ENCODE measurements at regions of chr14 and their contacts with region 1.

Region 1: DNA sequence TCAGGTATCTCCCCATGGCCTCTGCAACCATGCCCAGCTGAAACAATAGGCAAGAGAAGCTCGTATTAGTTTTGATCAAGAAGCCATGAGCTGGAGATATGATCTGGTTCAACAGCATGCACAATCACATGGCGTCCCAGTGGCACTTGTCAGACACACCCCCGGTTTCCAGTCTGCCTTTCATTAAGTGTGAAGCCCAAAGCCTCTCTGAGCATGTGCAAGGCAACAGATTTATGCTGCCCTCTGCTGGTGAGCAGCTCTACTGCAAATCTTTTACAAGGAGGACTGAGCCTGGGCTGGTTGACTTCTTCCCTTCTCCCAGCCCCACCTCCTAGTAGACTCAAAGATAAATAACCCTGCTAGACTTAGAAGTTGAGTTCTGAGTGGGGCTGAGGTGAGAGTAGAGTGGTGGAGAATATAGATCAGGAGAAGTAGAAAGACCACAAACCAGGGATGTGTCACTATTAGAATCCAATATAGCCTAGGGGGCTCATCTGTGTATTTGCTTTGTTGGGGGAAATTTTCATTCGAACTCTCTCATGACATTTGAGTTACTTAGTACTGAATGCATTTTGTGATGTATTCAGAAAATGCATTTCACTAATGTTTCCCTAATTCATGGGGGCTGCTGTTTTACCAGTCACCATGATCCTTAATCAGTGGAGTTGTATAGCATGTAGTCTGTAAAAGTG is 53.7 kb upstream of the MBIP start:
- DNase-seq: peak; percentile 19 to 92 (median 70)

Region 2: DNA sequence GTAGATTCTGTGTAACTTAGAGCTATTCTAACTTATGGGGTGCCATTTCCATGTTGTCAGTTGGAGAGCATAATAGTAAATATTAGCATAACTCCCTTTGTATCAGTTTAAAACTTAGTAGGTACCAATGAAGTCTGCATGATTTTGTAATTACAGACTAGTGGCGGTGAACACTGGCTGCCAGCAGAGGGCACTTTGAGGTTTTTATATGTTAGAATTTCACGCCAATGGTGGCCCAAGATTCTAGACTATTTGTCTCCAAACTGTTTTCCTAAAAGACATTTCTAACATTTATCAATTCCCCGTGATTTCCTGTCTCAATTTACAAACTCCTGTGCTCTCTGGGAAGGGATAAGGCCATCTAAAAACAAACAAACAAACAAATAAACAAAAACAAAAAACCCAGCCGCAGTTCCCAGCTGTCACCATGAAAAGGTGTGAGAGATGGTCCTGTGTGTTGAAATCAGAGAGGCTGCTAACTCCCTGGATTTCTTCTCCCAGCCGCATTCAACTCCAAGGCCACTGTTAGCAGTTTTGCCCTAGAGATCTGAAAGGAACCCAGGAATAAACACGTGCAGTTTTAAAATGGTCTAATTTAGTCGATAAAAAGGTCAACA is 490.3 kb before region 1 on chr14:
- intact Hi-C with region 1: loop called (anchors 2 kb)
- DNase-seq: peak in 6 of 10 donors; percentile 36 to 91 (median 59)

Region 3: GRCh38 chr14:35963209-35963608 is 410.9 kb before region 1 on chr14:
- intact Hi-C with region 1: loop called (anchors 10 kb)
- DNase-seq: no peak

Region 4: GRCh38 chr14:36070031-36070719 is 304.0 kb before region 1 on chr14:
- intact Hi-C with region 1: loop called (anchors 2 kb)
- DNase-seq: peak; percentile 61 to 97 (median 78)

Region 5: DNA sequence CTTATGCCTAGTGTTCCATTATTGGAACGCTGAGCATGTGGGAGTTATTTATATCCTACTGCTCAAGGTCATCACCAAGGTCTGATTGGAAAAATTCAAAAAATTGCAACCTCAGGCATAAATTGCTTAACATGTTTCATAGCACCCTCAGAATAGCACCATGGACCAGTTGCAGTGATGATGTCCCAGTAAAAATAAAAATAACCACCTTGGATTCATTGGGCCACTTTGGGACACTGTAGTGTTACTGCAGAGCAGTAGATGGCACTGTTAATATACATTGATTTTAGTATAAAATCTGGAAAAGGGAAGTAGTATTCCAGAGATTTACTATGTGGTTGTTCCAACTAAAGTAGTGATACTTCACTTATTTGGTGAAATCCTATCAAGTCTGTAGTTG is 166.6 kb before region 1 on chr14:
- intact Hi-C with region 1: loop called (anchors 1 kb)
- DNase-seq: no peak